ENCODE measurements at regions of chr4 and their contacts with region 1.

Region 1: DNA sequence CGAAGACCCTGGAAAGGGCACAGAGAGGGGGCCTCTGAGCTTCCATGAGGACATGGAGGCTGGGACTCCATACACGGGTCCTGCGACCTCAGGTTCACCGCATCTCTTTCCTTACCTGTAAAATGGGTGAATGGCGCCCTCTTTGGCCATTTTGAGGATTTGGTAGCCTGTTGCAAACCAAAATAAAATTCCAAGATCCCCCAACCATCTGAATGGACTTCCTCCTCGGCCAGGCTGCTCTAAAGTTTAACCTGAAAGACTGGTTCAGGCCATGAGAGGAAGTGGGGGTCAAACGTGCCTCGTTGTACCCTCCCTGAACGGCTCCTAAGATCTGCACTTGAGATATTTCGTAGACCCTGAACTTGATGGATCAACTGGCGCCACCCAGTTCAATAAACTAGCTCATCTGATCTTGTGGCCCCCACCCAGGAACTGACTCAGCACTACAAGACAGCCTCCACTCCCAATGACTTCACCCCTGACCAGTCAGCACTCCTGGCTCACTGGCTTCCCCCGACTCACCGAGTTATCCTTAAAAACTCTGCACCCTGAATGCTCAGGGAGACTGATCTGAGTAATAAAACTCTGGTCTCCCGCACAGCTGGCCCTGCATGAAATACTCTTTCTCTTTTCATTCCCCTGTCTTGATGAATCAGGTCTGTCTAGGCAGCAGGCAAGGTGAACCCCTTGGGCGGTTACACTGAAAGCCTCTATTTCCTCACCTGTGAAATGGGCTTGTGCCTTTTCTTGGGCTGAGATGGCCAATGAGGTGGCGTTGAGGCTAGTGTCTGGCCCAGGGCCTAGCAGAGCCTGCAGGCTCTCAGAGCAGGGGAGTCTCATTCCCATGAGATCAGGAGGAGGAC is 32.9 kb upstream of the GPR78 start:
- DNase-seq: peak; percentile 66 to 89
- H3K4me3 ChIP-seq: peak overlapping the region; percentile 28; the same call in 1 of the 2 replicates
- H3K27ac ChIP-seq: peak overlapping the region; percentile 98
- H3K4me1 ChIP-seq: peaks cover 46% of the 10 kb centered on the region
- H3K27me3 ChIP-seq: no peaks in the 10 kb centered on the region
- CTCF ChIP-seq: peak; percentile 47

Region 2: GRCh38 chr4:8241895-8242696 is 305.2 kb before region 1 on chr4:
- CTCF ChIA-PET with region 1: no interaction called
- POLR2A ChIA-PET with region 1: no interaction called
- intact Hi-C with region 1: loop called (anchors 2 kb)
- DNase-seq: peak in 1 of 2 experiments; percentile 85
- H3K4me3 ChIP-seq: no peak overlapping the region
- H3K27ac ChIP-seq: no peak overlapping the region
- H3K4me1 ChIP-seq: peaks cover 5% of the 10 kb centered on the region; the same call in 1 of the 2 replicates
- H3K27me3 ChIP-seq: no peaks in the 10 kb centered on the region
- CTCF ChIP-seq: peak; percentile 84

Region 3: GRCh38 chr4:8468746-8469535 is 78.4 kb before region 1 on chr4:
- CTCF ChIA-PET with region 1: no interaction called
- POLR2A ChIA-PET with region 1: interaction called, 4 read pairs
- intact Hi-C with region 1: loop called (anchors 1 kb)
- DNase-seq: peak; percentile 46 to 72
- H3K4me3 ChIP-seq: no peak overlapping the region
- H3K27ac ChIP-seq: no peak overlapping the region
- H3K4me1 ChIP-seq: peaks cover 15% of the 10 kb centered on the region; the same call in 1 of the 2 replicates
- H3K27me3 ChIP-seq: no peaks in the 10 kb centered on the region
- CTCF ChIP-seq: peak; percentile 89

Region 4: DNA sequence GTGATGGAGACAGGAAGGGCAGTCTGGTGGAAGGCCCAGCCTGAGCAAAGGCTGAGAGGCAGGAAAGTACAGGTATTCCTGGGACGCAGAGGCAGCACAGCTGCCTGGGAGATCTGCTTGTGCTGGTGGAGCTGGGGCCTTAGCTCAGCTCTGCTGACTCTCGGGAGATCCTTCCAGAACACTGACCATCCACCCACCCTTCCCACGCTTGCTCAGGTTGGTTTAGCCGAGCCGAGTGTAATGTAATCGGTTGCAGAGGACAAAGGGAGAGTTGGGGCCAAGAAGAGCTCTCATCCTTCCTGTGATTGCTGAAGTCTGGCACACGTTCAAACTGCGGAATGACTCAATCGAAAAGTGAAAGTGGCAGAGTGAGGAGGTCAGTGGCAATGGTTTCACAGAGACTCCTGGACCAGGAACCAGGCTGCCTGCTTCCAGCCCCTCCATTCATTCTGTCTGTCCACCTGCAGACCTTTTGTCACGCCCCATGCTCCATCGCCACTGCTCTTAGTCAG is 10.2 kb before region 1 on chr4:
- CTCF ChIA-PET with region 1: interaction called, 4 read pairs
- POLR2A ChIA-PET with region 1: no interaction called
- intact Hi-C with region 1: loop called (anchors 2 kb)
- DNase-seq: peak; percentile 80 to 86
- H3K4me3 ChIP-seq: no peak overlapping the region
- H3K27ac ChIP-seq: peak overlapping the region; percentile 86
- H3K4me1 ChIP-seq: peaks cover 85% of the 10 kb centered on the region
- H3K27me3 ChIP-seq: no peaks in the 10 kb centered on the region
- CTCF ChIP-seq: no peak

Region 5: DNA sequence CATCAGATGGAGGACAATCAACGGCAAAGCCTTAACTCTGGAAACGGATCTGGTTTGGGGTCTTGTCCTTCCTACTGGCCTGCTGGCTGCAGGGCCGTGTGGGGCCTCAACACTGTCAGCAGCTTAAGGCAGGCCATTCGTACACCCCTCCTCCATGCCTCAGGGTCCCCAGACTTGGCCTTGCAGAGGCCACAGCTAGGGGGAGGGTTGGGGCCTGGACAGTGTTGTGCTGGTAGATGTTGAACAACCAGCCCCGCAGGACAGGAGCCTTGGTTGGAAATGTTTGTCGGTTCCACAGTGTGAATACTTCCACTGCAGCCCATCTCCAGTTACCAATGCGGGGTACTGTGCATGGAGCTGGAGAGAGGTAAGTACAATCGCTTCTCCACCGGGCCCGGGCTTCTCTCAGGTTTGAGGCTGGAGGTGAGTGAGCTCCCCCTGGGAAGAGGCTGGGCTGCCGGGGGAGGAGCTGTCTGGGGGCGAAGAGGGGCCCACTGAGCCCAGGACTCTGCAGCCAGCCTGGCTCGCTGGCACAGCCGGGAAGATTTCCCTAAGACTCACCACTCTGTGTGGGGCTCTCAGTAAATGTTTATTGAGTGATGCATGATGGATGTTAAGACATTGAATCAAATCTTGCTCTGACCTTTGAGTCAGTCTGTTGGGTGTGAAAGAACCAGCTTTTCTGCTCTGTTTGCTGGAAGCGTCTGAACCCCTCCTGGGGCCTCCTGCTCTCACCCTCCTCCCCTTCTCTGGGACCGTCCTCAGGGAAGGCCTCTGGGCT is 13.1 kb after region 1 on chr4:
- CTCF ChIA-PET with region 1: interaction called, 4 read pairs
- POLR2A ChIA-PET with region 1: interaction called, 14 read pairs
- intact Hi-C with region 1: loop called (anchors 1 kb)
- DNase-seq: peak; percentile 55 to 94
- H3K4me3 ChIP-seq: peak overlapping the region; percentile 69
- H3K27ac ChIP-seq: peak overlapping the region; percentile 95
- H3K4me1 ChIP-seq: peaks cover 74% of the 10 kb centered on the region
- H3K27me3 ChIP-seq: no peaks in the 10 kb centered on the region
- CTCF ChIP-seq: no peak

Region 6: GRCh38 chr4:8607603-8608481 is 60.5 kb after region 1 on chr4:
- CTCF ChIA-PET with region 1: no interaction called
- POLR2A ChIA-PET with region 1: no interaction called
- intact Hi-C with region 1: no loop called
- DNase-seq: no peak
- H3K4me3 ChIP-seq: no peak overlapping the region
- H3K27ac ChIP-seq: no peak overlapping the region
- H3K4me1 ChIP-seq: no peaks in the 10 kb centered on the region
- H3K27me3 ChIP-seq: no peaks in the 10 kb centered on the region
- CTCF ChIP-seq: peak; percentile 50